Dorsolateral prefrontal cortex (tissue), 120 donors: ENCODE measurements at regions of chr1 and their contacts with region 1.

Region 1: GRCh38 chr1:8382051-8382505 is 64.2 kb downstream of the SLC45A1 start:
- DNase-seq: peak in 3 of 10 donors; percentile 55 to 63 (median 57)
- H3K4me3 ChIP-seq: peak overlapping the region in 24 of 59 donors; percentile 2 to 44 (median 24)
- H3K27ac ChIP-seq: peak overlapping the region in 56 of 59 donors; percentile 5 to 83 (median 68)
- H3K27me3 ChIP-seq: no peaks in the 10 kb centered on the region
- CTCF ChIP-seq: peak in 4 of 56 donors; percentile 11 to 34 (median 18)

Region 2: GRCh38 chr1:8097077-8097799 is 284.8 kb before region 1 on chr1:
- intact Hi-C with region 1: no loop called
- DNase-seq: no peak
- H3K4me3 ChIP-seq: no peak overlapping the region
- H3K27ac ChIP-seq: peak overlapping the region in 5 of 59 donors; percentile 28 to 67 (median 51)
- H3K27me3 ChIP-seq: no peaks in the 10 kb centered on the region
- CTCF ChIP-seq: no peak

Region 3: GRCh38 chr1:8431019-8431418 is 48.9 kb after region 1 on chr1:
- intact Hi-C with region 1: loop called in 1 of 2 experiments (anchors 5 kb)
- DNase-seq: no peak
- H3K4me3 ChIP-seq: no peak overlapping the region
- H3K27ac ChIP-seq: peak overlapping the region in 3 of 59 donors; percentile 35 to 46 (median 36)
- H3K27me3 ChIP-seq: no peaks in the 10 kb centered on the region
- CTCF ChIP-seq: peak in 1 of 56 donors; percentile 21